ENCODE measurements at regions of chr10 and their contacts with region 1.

Region 1: GRCh38 chr10:6050801-6051445 is 11.2 kb downstream of the IL2RA start:
- DNase-seq: peak; percentile 96
- ATAC-seq: peak; percentile 74
- H3K4me3 Mint-ChIP-seq: peak overlapping the region; percentile 88
- H3K27ac Mint-ChIP-seq: peak overlapping the region; percentile 98
- H3K4me1 Mint-ChIP-seq: peaks cover 85% of the 10 kb centered on the region
- H3K27me3 Mint-ChIP-seq: no peaks in the 10 kb centered on the region

Region 2: DNA sequence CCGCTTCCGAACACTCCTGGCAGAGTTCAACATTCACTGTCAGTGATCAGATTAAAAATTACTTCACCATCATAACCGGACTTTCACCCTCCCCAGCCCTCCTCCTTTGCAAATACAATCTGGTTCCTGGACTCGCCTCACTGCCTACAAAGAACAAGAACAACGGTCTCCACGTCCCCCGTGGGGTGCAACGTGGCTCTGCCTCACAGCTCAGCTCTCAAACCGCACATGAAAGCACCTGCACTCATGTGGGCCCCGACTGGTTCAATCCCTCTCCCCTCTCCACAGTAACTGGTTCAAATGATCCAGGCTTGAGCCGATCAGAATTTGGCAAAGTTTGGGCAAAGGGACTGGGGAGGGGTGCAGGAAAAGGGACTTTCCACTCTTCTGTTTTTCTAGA is 405.5 kb before region 1 on chr10:
- CTCF ChIA-PET with region 1: no interaction called
- POLR2A ChIA-PET with region 1: no interaction called
- DNase-seq: no peak
- ATAC-seq: no peak
- H3K4me3 Mint-ChIP-seq: no peak overlapping the region
- H3K27ac Mint-ChIP-seq: no peak overlapping the region
- H3K4me1 Mint-ChIP-seq: no peaks in the 10 kb centered on the region
- H3K27me3 Mint-ChIP-seq: no peaks in the 10 kb centered on the region

Region 3: DNA sequence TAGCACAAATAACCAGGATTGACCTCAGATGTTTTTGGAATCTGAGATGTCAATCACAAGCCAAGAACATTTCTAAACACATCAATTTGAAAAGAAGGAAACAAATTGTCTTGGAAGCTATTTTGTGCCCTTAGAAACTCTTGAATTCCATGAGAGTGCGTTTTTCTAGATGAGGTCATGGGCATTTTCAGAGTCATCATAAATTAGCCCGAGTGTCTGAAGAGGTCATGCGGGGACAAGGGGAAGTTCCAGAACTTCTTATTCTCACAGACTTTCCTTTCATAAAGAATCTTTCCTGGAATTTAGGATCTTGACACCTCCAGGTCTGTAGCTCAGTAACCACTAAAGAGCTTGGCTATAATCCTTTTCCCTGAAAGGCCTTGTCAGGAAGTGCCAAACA is 17.0 kb before region 1 on chr10:
- CTCF ChIA-PET with region 1: interaction called, 41 read pairs
- POLR2A ChIA-PET with region 1: interaction called, 35 read pairs
- DNase-seq: no peak
- ATAC-seq: no peak
- H3K4me3 Mint-ChIP-seq: no peak overlapping the region
- H3K27ac Mint-ChIP-seq: peak overlapping the region; percentile 15
- H3K4me1 Mint-ChIP-seq: peaks cover 65% of the 10 kb centered on the region
- H3K27me3 Mint-ChIP-seq: no peaks in the 10 kb centered on the region

Region 4: GRCh38 chr10:6062101-6062771 is 11.3 kb after region 1 on chr10 and contains the start of gene IL2RA:
- CTCF ChIA-PET with region 1: interaction called, 67 read pairs
- POLR2A ChIA-PET with region 1: interaction called, 134 read pairs
- DNase-seq: peak; percentile 73
- ATAC-seq: peak; percentile 74
- H3K4me3 Mint-ChIP-seq: peak within 1 kb of the TSS; percentile 91
- H3K27ac Mint-ChIP-seq: peak within 1 kb of the TSS; percentile 92
- H3K4me1 Mint-ChIP-seq: peaks cover 72% of the 10 kb centered on the region
- H3K27me3 Mint-ChIP-seq: no peaks in the 10 kb centered on the region
- total RNA-seq, gene IL2RA: 174 to 177 TPM

Region 5: GRCh38 chr10:6068422-6068821 is 17.5 kb after region 1 on chr10:
- CTCF ChIA-PET with region 1: interaction called, 67 read pairs
- POLR2A ChIA-PET with region 1: interaction called, 134 read pairs
- DNase-seq: peak; percentile 81
- ATAC-seq: peak; percentile 77
- H3K4me3 Mint-ChIP-seq: peak overlapping the region; percentile 74
- H3K27ac Mint-ChIP-seq: peak overlapping the region; percentile 95
- H3K4me1 Mint-ChIP-seq: peaks cover 94% of the 10 kb centered on the region
- H3K27me3 Mint-ChIP-seq: no peaks in the 10 kb centered on the region

Region 6: DNA sequence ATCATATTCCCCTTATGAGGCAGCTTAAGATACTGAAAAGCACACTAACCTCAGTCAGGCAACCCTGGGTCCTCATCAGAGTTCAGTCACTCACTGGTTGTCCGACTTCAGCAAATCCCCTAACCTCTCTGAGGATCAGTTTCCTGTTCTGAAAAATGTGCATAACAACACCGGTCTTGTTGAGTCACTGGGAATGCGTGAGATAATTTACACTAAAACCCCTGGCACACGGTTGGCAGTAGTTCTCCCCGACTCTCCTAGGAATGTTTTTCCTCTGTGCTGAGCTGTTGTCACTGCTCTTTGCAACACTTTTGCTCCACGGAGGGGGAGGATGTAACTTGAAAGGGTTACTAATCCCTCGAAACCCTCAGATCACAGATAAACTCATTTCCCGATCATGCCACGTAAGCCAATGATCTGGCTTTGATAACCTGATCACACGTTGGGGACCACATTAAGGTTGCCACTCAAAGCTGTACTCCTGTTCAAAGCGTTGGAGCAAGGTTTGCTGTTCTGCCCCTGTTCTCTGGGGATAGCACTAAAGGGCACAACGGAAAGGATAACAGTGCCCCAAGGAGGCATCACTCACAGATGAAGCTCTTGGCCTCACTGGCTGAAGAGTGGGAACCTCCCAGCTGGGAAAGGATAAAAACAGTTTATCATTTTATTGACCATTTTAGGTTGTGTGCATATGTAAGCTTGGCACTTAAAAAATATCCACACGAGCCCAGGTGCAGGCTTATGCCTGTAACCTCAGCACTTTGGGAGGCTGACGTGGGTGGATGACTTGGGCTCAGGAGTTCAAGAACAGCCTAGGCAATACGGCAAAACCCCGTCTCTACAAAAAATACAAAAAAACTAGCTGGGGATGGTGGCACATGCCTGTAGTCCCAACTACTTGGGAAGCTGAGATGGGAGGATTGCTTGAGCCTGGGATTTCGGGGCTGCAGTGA is 32.9 kb after region 1 on chr10:
- CTCF ChIA-PET with region 1: interaction called, 81 read pairs
- POLR2A ChIA-PET with region 1: interaction called, 23 read pairs
- DNase-seq: peak; percentile 74
- ATAC-seq: peak; percentile 67
- H3K4me3 Mint-ChIP-seq: peak overlapping the region; percentile 64
- H3K27ac Mint-ChIP-seq: peak overlapping the region; percentile 86
- H3K4me1 Mint-ChIP-seq: peaks cover 78% of the 10 kb centered on the region
- H3K27me3 Mint-ChIP-seq: no peaks in the 10 kb centered on the region